Naive thymus-derived CD8-positive, alpha-beta T cell (primary cell): ENCODE measurements at regions of chr17 and their contacts with region 1.

Region 1: DNA sequence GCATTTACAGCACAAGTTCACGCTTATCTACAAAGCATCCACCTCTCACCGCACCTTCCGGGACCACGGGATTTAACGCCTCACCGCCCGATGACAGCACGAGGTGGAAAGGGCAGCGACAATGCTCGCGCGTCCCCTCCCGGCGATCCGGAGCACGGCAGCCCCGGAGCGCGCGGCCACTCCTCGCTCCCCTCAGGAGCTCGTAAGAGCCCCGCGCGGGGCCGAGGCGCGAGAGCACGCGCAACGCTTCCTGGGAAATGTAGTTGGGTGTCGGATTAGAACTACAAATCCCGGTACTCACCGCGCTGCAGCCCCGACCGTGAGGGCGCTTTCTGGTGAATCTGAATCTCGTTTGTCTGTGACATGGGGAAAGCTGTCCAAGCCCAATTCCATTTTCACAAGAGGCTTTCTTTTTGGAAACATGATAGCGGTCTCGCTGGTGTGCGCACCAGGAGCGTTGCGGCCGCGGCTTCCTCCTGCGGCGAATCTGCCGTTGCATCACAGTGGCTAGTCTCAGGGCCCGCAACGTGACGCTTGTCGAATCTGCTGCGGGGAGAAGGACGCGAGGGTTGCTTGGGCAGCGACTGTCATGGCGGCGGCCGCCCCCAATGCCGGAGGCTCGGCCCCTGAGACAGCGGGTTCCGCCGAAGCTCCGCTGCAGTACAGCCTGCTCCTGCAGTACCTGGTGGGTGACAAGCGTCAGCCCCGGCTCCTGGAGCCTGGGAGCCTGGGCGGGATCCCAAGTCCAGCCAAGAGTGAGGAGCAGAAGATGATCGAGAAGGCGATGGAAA is at the start of gene TIMM22:
- DNase-seq: peak; percentile 84 to 99 (median 92)
- ATAC-seq: peak; percentile 94
- H3K4me3 Mint-ChIP-seq: peak within 1 kb of the TSS; percentile 94 to 99 (median 98)
- H3K27ac Mint-ChIP-seq: peak within 1 kb of the TSS; percentile 96 to 99 (median 98)
- H3K4me1 Mint-ChIP-seq: peaks cover 16 to 27% (median 24%) of the 10 kb centered on the region in 4 donors
- H3K27me3 Mint-ChIP-seq: no peaks in the 10 kb centered on the region
- polyA plus RNA-seq, gene TIMM22: 20.8 to 25.2 (median 23.5) TPM

Region 2: DNA sequence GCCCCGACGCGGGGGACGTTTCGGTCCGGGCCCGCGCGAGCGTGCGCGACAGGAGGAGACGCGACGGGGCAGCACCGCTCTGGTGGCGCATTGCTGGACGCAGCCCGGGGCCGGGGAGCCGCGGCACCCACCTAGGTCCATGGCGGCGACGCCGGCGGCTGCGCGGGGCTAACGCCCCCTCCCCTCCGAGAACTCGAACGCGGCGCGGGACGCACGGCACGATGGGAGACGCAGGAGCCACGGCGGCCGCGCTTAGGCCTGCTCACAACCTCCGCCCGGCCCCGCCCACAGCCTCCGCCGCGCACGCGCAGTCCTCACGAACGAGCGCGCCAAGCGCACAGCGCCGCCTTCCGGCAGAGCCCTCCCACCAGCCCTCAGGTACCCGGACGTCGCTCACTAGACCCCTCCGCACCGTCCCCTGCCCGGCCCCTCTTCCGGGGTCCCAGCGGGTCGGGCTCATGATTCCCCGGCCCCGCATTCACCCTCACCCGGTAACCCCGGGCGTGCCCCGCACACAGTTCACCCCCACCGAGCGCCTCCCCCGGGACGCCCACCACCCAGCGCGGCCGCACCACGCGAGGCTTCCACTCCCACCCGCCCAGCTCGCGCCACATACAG is 244.6 kb before region 1 on chr17 and contains the start of gene GEMIN4:
- POLR2A ChIA-PET with region 1: interaction called, 17 read pairs
- DNase-seq: peak; percentile 92 to 100 (median 98)
- ATAC-seq: peak; percentile 83 to 84
- H3K4me3 Mint-ChIP-seq: peak within 1 kb of the TSS; percentile 92 to 98 (median 96)
- H3K27ac Mint-ChIP-seq: peak within 1 kb of the TSS; percentile 93 to 98 (median 97)
- H3K4me1 Mint-ChIP-seq: peaks cover 33 to 45% (median 37%) of the 10 kb centered on the region in 4 donors
- H3K27me3 Mint-ChIP-seq: no peaks in the 10 kb centered on the region
- polyA plus RNA-seq, gene GEMIN4: 16.6 to 35.1 (median 21.2) TPM

Region 3: GRCh38 chr17:979538-980405 is 17.0 kb before region 1 on chr17 and contains the start of gene NXN:
- POLR2A ChIA-PET with region 1: interaction called, 27 read pairs
- DNase-seq: peak; percentile 74 to 97 (median 88)
- ATAC-seq: peak; percentile 76 to 80
- H3K4me3 Mint-ChIP-seq: peak within 1 kb of the TSS; percentile 71 to 87 (median 84)
- H3K27ac Mint-ChIP-seq: peak within 1 kb of the TSS in 7 of 10 donors; percentile 11 to 90 (median 75)
- H3K4me1 Mint-ChIP-seq: peaks cover 9 to 21% (median 17%) of the 10 kb centered on the region in 4 donors
- H3K27me3 Mint-ChIP-seq: peaks cover 15 to 35% (median 33%) of the 10 kb centered on the region in 5 donors
- polyA plus RNA-seq, gene NXN: 0.06 to 0.85 (median 0.07) TPM